ENCODE measurements at regions of chr13 and their contacts with region 1.

Region 1: DNA sequence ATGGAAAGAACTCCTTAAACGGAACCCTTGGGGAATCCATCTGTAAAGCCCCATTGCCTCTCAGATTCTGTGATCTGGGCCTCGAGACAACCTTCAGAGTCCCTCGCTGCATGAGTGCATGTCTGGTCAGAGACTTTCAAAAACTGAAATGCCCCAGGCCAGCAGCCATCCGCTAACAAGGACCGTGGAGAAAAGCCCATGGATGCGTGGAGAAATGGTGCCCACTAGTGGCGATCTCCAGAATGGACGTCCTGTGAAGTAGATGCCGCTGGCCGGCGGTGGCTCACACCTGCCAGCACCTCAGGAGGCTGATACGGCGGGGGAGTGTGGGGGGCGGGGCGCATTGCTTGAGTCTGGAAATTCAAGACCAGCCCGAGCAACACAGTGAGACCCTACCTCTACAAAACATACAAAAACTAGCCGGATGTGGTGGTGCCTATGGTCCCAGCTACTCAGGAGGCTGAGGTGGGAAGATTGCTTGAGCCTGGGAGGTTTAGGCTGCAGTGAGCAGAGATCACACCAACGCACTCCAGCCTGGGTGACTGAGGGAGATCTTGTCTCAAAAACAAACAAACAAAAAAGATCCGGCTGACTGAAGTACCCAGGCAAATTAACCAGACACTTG is 7.9 kb upstream of the CDC16 start:
- DNase-seq: peak; percentile 95
- H3K4me3 Mint-ChIP-seq: peak overlapping the region; percentile 38
- H3K27ac Mint-ChIP-seq: peak overlapping the region; percentile 63
- H3K4me1 Mint-ChIP-seq: peaks cover 52% of the 10 kb centered on the region
- H3K27me3 Mint-ChIP-seq: no peaks in the 10 kb centered on the region

Region 2: GRCh38 chr13:113919761-113920559 is 306.9 kb before region 1 on chr13:
- CTCF ChIA-PET with region 1: no interaction called
- intact Hi-C with region 1: loop called (anchors 1 kb)
- DNase-seq: no peak
- H3K4me3 Mint-ChIP-seq: no peak overlapping the region
- H3K27ac Mint-ChIP-seq: no peak overlapping the region
- H3K4me1 Mint-ChIP-seq: no peaks in the 10 kb centered on the region
- H3K27me3 Mint-ChIP-seq: peaks cover 25% of the 10 kb centered on the region

Region 3: GRCh38 chr13:114019367-114019766 is 207.4 kb before region 1 on chr13:
- CTCF ChIA-PET with region 1: no interaction called
- intact Hi-C with region 1: loop called (anchors 5 kb)
- DNase-seq: peak; percentile 44
- H3K4me3 Mint-ChIP-seq: no peak overlapping the region
- H3K27ac Mint-ChIP-seq: peak overlapping the region; percentile 9
- H3K4me1 Mint-ChIP-seq: peaks cover 4% of the 10 kb centered on the region
- H3K27me3 Mint-ChIP-seq: no peaks in the 10 kb centered on the region

Region 4: GRCh38 chr13:114110091-114110829 is 116.6 kb before region 1 on chr13:
- CTCF ChIA-PET with region 1: interaction called, 3 read pairs
- intact Hi-C with region 1: loop called (anchors 1 kb)
- DNase-seq: peak; percentile 88
- H3K4me3 Mint-ChIP-seq: peak overlapping the region; percentile 82
- H3K27ac Mint-ChIP-seq: peak overlapping the region; percentile 90
- H3K4me1 Mint-ChIP-seq: peaks cover 83% of the 10 kb centered on the region
- H3K27me3 Mint-ChIP-seq: no peaks in the 10 kb centered on the region

Region 5: DNA sequence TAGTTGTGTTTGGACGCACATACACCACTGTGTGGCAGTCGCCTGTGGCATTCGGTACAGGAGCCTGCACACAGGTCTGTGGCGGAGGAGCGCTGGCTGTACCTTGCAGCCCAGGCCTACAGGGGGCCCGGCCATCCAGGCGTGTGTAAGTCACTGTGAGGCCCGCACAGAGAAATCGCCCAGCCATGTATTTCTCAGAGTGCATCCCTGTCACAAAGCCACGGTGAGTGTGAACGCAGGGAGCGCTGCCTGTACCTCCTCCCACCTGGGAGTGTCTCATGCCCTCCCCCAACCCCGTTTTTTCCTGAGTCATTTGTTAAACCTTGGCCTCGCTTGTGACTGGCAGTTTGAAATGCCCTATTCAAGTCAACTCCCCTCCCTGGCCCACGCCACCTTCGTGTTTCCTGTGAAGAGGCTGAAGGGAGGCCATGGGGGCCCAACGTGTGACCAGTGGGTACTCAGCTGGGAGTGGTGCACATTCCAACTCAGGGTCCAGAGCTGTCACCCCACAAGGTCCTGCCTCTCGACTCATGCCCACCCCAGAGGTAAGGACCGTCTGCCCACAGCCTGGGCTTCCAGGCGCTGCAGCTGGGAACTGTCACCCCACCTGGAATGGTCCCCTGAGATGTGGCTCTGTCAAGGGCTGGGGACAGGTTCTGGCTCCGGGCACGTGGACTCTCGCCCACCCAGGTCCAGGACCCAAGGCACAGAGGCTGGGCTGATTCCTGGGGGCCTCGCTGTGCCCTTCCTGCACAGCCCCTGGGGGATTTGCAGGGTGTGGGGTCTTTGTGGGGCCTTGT is 82.8 kb before region 1 on chr13:
- CTCF ChIA-PET with region 1: interaction called, 6 read pairs
- intact Hi-C with region 1: loop called (anchors 1 kb)
- DNase-seq: peak; percentile 70
- H3K4me3 Mint-ChIP-seq: no peak overlapping the region
- H3K27ac Mint-ChIP-seq: peak overlapping the region; percentile 54
- H3K4me1 Mint-ChIP-seq: peaks cover 40% of the 10 kb centered on the region
- H3K27me3 Mint-ChIP-seq: no peaks in the 10 kb centered on the region

Measured in activated naive CD4-positive, alpha-beta T cell treated with anti-CD3 and anti-CD28 coated beads for 36 hours (primary cell).